Panc1 (cell line): ENCODE measurements at regions of chr14 and their contacts with region 1.

Region 1: GRCh38 chr14:98593361-98593761 is 678.6 kb downstream of the BCL11B start:
- DNase-seq: no peak
- ATAC-seq: no peak
- H3K4me3 ChIP-seq: no peak overlapping the region
- H3K27ac ChIP-seq: no peak overlapping the region
- H3K4me1 ChIP-seq: no peaks in the 10 kb centered on the region
- H3K27me3 ChIP-seq: no peaks in the 10 kb centered on the region
- CTCF ChIP-seq: no peak

Region 2: DNA sequence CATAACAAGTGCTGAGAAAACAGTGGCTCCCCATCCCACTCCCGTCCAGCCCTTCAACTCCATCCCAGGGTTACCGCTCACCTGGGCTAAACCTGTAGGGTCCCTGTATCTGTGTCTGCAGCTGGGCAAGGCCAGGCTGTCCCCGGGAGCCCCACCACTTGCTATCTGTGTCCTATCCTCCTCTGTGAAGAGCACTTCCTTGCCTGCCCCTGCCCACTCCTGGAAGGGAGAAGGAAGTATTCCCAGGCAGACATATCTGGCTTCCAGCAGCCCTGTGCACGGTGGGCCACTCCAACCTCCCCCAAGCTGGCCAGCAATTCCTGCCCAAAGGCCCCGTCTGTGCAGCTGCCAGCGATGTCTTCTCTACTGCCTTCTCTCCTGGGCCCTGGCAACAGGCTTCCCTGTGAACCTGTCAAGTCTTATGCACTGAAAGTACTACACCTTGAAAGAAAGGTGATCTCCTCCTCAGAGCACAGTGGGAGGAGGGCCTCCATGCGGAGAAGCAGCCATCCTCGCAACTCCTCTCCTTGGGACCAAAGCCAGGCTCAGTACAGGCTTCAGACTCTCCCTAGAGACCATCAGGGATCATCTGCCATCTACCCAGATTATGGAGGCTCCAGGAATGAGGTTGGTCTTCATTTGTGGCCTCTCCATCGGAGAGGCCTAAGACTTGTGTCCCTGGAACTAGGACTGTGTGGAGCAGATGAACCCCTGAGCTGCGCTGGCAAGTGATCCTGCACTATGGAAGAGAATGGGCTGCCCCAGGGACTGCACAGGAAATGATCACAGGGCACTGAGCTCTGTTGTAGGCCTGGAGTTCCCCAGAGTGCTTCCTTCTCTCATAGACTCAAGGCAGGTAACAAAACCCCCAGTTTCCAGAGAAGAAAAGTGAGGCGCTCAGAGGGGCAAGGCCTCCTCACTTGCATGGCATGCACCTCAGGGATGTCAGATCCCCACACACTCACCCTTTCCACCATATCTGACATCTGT is 15.0 kb after region 1 on chr14:
- CTCF ChIA-PET with region 1: no interaction called
- POLR2A ChIA-PET with region 1: no interaction called
- in situ Hi-C with region 1: no loop called
- intact Hi-C with region 1: no loop called
- DNase-seq: no peak
- ATAC-seq: no peak
- H3K4me3 ChIP-seq: no peak overlapping the region
- H3K27ac ChIP-seq: no peak overlapping the region
- H3K4me1 ChIP-seq: no peaks in the 10 kb centered on the region
- H3K27me3 ChIP-seq: no peaks in the 10 kb centered on the region
- CTCF ChIP-seq: no peak

Region 3: GRCh38 chr14:98731701-98732100 is 138.3 kb after region 1 on chr14:
- CTCF ChIA-PET with region 1: no interaction called
- POLR2A ChIA-PET with region 1: no interaction called
- in situ Hi-C with region 1: no loop called
- intact Hi-C with region 1: no loop called
- DNase-seq: no peak
- ATAC-seq: no peak
- H3K4me3 ChIP-seq: no peak overlapping the region
- H3K27ac ChIP-seq: no peak overlapping the region
- H3K4me1 ChIP-seq: no peaks in the 10 kb centered on the region
- H3K27me3 ChIP-seq: no peaks in the 10 kb centered on the region; the same call in 1 of the 2 replicates
- CTCF ChIP-seq: no peak

Region 4: GRCh38 chr14:98766818-98767217 is 173.5 kb after region 1 on chr14:
- CTCF ChIA-PET with region 1: interaction called, 14 read pairs
- POLR2A ChIA-PET with region 1: no interaction called
- in situ Hi-C with region 1: no loop called
- intact Hi-C with region 1: no loop called
- DNase-seq: no peak
- ATAC-seq: no peak
- H3K4me3 ChIP-seq: no peak overlapping the region
- H3K27ac ChIP-seq: no peak overlapping the region
- H3K4me1 ChIP-seq: no peaks in the 10 kb centered on the region
- H3K27me3 ChIP-seq: no peaks in the 10 kb centered on the region
- CTCF ChIP-seq: no peak